Activated naive CD4-positive, alpha-beta T cell treated with anti-CD3 and anti-CD28 coated beads for 36 hours (primary cell): ENCODE measurements at regions of chr15 and their contacts with region 1.

Region 1: DNA sequence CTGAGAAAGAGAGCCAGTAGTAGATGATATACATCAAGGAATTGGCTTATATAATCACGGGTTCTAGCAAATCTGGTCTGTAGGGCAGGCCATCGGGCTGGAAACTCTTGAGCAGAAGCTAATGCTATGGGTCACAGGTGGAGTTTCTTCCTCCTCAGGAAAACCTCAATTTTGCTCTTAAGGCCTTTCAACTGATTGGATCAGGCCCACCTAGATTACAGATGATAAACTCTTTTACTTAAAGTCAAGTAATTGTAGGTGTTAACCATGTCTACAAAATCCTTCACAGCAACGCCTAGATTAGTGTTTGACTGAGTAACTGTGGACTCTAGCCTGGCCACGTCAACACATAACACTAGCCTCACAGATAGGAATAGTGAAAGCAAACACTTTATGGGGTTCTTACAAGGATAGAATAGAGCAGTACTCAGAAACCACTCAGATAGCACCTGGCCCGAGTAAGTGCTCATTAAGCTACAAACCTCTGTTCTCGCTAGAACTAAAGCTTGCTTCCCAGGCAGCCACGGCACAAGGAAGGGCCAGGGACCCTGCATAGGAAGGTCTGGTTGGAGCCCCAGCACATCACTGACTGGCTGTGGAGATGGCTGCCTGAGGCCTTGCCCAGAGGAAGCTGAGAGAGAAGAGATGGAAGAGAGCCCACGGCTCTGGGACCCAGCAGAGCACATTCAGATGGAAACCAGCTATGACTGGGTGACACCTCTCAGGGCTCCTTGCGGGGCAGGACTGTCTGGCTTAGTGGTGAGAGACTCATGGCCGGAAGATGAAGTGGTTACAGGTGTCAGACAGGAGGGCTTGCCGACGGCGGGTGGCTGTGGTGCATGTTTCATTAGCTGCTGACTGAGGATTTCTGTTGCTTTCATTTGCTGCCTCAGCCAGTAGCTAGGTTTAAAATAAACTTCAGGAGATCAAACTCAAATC is 202.5 kb upstream of the TLE3 start:
- DNase-seq: peak; percentile 89
- H3K4me3 Mint-ChIP-seq: no peak overlapping the region
- H3K27ac Mint-ChIP-seq: no peak overlapping the region
- H3K4me1 Mint-ChIP-seq: peaks cover 11% of the 10 kb centered on the region
- H3K27me3 Mint-ChIP-seq: no peaks in the 10 kb centered on the region

Region 2: DNA sequence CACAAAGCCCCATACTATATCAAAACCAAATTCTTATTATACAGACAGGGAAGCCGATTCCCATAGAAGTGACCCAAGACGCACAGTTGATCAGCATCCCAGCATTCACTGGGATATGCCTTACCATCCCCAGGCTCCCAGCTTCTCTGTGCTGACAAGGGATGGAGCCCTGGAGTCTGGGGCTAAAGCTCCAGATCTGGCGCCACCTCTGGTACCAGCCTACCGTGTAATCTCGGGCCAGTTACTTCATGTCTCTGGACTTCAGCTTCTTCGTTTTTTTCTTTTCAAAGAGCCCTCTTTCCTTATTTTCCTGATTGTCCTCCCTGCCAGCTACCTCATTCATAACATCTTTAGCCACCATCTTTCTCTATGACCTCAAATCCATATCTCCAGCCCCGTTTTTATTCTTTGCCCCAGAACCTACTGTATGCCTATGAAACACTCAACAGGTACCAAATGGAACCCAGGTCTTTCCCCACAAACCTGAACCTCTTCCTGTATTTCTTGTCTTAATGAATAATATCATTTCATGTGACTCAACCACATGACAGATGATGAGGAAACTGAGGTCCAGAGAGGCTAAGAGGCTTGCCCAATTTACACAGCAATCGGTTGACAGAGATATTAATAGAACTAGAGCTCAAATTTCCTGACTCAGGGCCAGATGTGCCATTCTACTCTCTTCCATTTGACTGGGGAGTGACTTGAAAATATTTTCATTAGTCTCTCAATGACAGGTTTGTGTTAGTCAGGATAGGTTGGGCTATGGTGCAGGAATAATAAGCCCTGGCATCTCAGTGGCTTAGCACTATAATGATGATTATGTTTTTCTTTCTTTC is 117.1 kb before region 1 on chr15:
- CTCF ChIA-PET with region 1: no interaction called
- intact Hi-C with region 1: no loop called
- DNase-seq: no peak
- H3K4me3 Mint-ChIP-seq: no peak overlapping the region
- H3K27ac Mint-ChIP-seq: no peak overlapping the region
- H3K4me1 Mint-ChIP-seq: peaks cover 3% of the 10 kb centered on the region
- H3K27me3 Mint-ChIP-seq: no peaks in the 10 kb centered on the region

Region 3: DNA sequence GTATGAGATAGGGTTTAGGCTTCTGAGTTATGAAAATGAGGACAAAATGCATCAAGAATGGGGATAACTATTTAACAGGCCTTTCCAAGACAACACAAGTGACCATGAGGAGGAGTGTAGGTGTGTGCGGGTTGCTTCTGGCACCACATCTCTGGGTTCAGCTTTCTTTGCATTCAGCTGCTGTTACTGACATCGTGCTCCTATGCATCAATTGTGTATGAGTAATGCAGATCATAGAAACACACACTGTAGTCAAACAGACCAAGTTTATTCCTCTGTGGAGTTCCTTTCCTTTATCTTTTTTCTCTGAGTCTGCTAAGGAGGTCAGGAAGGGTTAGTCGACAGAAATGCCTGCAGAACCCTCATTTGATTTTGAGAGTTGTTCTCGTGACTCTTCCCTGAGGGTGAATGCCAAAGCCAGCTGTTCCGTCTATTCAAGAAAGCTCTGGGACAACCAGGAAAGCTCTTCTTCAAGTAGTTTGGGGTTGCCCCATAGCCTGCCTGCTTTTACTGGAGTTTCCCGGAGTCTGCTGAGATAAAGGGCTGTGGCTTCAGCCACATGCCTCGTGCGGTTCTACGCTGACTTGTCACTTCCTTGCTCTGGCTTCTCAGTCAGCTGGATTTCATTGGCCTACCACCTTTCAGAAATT is 65.8 kb before region 1 on chr15:
- CTCF ChIA-PET with region 1: no interaction called
- intact Hi-C with region 1: loop called (anchors 1 kb)
- DNase-seq: peak; percentile 69
- H3K4me3 Mint-ChIP-seq: no peak overlapping the region
- H3K27ac Mint-ChIP-seq: peak overlapping the region; percentile 55
- H3K4me1 Mint-ChIP-seq: peaks cover 26% of the 10 kb centered on the region
- H3K27me3 Mint-ChIP-seq: peaks cover 2% of the 10 kb centered on the region

Region 4: GRCh38 chr15:70426105-70426821 is 126.1 kb after region 1 on chr15:
- CTCF ChIA-PET with region 1: no interaction called
- intact Hi-C with region 1: loop called (anchors 10 kb)
- DNase-seq: no peak
- H3K4me3 Mint-ChIP-seq: no peak overlapping the region
- H3K27ac Mint-ChIP-seq: no peak overlapping the region
- H3K4me1 Mint-ChIP-seq: peaks cover 19% of the 10 kb centered on the region
- H3K27me3 Mint-ChIP-seq: no peaks in the 10 kb centered on the region